ENCODE measurements at regions of chr18 and their contacts with region 1.

Region 1: GRCh38 chr18:48781163-48781987 is 169.4 kb downstream of the SMAD7 start:
- DNase-seq: no peak
- ATAC-seq: no peak
- H3K4me3 ChIP-seq: no peak overlapping the region
- H3K27ac ChIP-seq: no peak overlapping the region
- H3K4me1 ChIP-seq: peaks cover 6% of the 10 kb centered on the region; the same call in 1 of the 2 replicates
- H3K27me3 ChIP-seq: no peaks in the 10 kb centered on the region
- CTCF ChIP-seq: no peak

Region 2: DNA sequence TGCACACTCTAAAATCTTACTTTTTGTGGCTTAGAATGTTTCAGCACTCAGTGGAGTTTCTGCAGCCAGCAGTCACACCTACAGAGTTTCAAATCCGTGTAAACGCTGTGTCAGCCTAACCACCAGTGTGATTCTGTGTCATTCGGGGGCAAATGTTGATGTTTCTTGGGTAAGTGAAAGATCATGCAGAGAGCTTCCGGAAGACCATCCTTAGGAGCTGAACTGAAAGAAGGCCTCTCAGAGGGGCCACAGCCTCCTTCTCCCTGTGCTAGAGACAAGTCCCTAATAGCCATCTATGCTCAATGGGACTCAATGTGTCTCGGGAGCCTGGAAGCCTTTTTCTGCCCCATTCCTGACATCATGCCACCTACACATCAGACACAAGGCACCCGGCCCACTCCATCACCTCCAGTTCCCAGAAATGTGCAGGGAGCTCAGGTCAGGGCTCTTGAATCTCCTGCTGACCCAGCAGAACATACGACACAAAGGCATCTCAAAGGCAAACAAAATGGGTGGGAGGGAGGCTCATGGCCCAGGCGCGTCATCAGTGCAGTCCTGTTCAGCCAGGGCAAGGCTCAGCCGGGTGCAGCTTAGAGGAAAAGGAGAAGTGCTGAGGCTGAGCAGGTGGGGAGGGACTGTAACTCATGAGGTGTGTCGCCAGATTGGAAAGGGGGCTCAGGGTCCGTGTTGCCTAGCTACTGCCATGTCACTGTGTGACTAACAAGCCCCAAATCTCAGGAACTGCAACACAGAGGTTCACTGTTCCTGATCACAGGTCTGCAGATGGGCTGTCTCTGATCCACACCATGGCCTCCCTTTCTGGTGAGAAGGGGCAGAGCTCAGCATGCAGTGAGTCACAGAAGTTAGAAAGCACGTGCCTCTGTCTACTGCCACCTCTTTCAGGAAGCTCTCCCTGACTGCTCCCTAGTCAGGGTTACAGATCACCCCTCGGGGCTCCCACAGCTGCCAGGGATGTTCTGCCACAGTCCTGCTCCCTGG is 87.4 kb after region 1 on chr18:
- CTCF ChIA-PET with region 1: no interaction called
- POLR2A ChIA-PET with region 1: no interaction called
- in situ Hi-C with region 1: no loop called
- intact Hi-C with region 1: no loop called
- DNase-seq: no peak
- ATAC-seq: no peak
- H3K4me3 ChIP-seq: no peak overlapping the region
- H3K27ac ChIP-seq: no peak overlapping the region
- H3K4me1 ChIP-seq: peaks cover 20% of the 10 kb centered on the region
- H3K27me3 ChIP-seq: no peaks in the 10 kb centered on the region
- CTCF ChIP-seq: no peak

Region 3: DNA sequence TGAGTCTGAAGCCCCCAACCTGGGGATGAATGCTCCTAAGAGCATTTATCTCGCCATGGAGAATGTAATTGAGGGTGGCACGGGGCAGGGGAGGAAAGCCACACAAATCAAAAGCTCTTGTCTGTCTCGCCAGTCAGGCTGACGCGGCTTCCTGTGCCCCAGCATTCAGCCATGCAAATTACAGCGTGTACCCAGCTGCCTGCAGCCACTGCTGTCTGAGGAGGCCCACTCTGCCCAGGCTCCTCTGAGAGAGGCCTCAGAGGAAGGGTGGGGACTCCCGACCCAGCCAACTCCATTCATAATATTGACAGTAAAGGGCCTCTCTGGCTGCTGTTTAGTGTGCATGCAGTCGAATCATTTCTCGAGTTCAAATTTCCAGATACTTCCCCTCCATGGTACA is 147.4 kb after region 1 on chr18:
- CTCF ChIA-PET with region 1: no interaction called
- POLR2A ChIA-PET with region 1: no interaction called
- in situ Hi-C with region 1: no loop called
- intact Hi-C with region 1: loop called (anchors 10 kb)
- DNase-seq: no peak
- ATAC-seq: no peak
- H3K4me3 ChIP-seq: peak overlapping the region in 1 of 2 experiments; percentile 23; a peak in 2 of 4 replicates
- H3K27ac ChIP-seq: peak overlapping the region; percentile 99
- H3K4me1 ChIP-seq: peaks cover 93% of the 10 kb centered on the region
- H3K27me3 ChIP-seq: no peaks in the 10 kb centered on the region
- CTCF ChIP-seq: no peak

Measured in Panc1 (cell line).